HEK293T (cell line): ENCODE measurements at regions of chr18 and their contacts with region 1.

Region 1: DNA sequence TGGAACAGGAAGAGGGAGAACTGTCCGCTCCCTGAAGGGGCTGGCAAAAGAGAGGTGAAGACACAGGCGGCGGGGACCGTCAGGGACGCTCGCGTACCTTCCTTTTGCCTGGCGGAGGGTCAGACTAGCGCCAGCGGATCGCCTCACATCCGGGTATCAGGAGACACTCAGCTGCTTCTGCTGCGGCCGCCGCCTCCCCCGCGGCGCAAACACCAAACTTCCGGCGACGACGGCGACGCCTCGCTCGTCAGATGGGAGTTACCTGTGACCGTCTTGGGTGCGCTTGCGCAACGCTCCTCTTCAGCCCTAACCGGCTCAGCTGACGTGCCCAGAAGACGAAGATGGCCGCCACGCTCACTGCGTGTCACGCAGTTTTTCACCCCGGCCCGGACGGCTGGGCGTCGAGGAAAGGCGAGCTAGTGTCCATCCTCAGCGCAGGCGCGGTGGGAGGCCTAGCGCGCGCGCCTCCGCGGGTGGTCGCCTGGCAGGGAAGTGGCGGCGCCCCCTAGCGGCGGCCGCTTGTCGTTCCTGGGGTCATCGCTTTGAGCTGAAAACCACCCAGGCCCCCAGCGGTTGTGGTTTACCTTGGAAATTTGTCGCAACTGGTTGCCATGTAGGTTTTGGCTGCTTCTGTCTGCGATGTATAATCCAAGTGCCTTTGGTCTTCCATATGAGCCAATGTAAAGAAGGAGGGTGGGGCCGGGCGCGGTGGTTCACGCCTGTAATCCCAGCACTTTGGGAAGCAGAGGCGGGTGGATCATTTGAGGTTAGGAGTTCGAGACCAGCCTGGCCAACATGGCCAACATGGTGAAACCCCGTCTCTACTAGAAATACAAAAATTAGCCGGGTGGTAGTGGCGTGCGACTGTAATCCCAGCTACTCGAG is at the start of gene ESCO1:
- DNase-seq: peak; percentile 96

Region 2: DNA sequence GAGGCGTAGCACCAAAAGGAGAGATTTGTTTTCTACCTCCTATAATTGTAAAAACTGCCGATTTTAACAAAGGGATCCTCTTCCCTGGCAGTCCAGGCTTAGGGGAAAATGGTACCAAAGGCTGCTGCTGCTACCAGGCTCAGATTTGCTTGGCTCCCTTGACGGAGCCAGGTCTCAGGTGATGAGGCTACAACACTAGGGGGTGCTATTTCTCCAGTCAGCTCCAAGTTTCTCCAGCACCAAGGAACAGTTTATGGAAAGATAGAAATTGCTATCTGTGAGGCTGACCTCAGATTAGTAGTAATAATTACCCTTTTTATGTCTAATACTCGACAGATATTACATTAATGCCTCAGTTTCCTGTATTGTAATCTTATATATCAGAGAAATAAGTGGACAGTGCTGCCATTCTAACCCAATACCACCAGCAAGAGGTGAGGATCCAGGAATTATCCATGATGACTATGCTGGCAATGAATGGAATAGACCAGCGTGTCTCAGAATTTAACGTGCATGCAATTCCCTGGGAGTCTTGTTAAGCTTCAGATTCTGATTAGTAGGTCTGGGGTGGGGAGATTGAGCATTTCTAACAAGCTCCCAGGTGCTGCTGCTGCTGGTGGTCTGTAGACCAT is 111.5 kb before region 1 on chr18:
- CTCF ChIA-PET with region 1: interaction called, 10 read pairs
- POLR2A ChIA-PET with region 1: interaction called, 5 read pairs
- DNase-seq: peak; percentile 80

Region 3: DNA sequence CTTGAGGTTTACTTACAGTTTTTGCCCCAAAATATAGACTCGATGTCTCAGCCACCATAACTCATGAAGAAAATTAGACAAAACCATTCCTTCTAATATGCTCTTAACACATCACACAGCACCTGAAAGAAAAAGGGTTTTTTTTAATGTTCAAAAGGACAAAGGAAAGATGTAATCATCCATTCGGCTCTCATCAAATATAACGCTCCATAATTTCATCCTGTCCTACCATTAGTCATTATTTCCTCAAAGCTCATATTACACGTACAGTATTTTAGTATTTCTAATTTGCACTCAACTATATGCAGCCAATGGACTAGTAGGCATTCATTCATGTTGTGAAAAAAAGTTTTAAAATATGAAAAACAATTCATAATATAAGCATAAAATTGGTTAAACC is 25.1 kb before region 1 on chr18:
- CTCF ChIA-PET with region 1: interaction called, 5 read pairs
- POLR2A ChIA-PET with region 1: interaction called, 11 read pairs
- DNase-seq: no peak

Region 4: DNA sequence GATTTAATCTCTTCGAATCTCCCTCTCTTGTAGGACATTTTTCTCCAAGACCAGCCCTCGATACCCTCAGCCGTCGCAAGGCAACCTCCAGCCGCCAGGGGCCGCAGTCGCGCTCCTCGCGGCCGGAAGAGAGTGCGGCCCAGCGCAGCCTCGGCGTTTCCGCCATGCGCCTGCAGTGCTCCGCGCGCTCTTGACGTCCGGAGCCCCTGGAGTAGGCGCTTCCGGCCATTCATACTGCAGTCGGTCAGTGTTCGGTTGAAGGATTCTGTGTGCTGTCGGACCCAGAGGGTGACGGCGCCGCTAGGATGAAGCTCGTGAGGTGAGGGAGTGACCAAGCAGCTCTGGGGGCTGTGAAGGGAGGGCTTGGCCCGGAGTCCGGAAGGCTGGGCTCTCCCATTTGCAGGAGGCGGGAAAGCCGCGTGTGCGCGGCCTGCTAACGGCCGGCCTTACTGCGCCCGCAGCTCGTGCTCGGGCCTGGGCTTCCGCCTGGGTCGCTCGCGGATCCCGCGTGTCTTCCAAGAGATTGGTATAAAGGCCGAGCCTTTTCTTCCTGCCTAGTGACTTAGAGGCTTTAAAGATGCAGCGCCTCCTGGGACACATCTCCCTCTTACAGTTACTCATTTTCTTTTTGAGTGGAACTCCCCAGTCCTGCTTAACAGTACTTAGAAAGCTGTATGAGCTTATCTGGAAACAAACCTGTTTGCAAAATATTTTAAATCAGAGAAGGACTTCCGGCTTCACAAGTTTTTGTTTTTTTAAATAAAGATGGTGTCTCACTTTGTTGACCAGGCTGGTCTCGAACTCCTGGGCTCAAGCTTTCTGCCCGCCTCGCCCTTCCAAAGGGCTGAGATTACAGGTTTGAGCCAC is 11.6 kb after region 1 on chr18 and contains the start of gene SNRPD1:
- CTCF ChIA-PET with region 1: interaction called, 48 read pairs
- POLR2A ChIA-PET with region 1: interaction called, 58 read pairs
- DNase-seq: peak; percentile 96

Region 5: DNA sequence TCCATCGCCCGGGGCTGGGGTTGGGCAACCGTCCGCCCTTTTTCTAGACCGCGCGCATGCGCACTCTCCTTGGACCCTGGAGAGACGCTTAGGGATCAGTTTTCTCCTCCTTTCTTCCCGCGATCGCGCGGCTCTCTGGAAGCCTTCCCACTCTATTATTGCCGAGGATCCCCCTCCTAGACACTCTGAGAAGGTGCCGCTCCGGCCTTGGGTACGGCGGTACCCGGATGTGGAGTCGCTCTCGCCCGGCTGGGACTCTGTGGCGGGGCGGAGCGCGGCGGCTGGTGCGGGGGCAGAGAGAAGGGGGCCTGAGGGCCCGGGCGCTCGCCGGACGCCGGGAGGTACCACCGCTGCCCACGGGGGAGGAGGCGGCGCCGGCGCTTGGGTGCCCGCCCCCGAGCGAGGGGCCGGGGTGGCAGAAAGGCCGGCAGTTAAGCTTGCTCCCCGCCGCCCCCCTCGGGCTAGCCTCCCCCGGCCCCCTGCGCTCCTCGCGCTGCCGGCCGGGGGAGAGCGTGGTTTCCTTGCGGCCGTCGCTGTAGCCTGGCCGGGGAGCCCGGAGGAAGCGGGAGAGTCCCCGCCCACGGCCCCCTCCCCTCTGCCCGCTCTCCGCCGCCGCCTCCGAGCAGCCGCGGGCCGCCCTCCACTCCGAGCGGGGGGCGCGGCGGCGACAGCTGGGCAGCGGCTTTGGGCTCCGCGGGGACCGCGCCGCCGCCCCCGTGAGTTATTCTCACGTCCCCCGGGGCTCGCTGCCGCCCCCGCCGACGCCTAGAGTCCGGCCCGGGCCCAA is 140.1 kb after region 1 on chr18 and contains the start of gene MIB1:
- CTCF ChIA-PET with region 1: interaction called, 6 read pairs
- POLR2A ChIA-PET with region 1: interaction called, 30 read pairs
- DNase-seq: peak; percentile 61